Heart left ventricle (tissue), 16 donors: ENCODE measurements at regions of chr9 and their contacts with region 1.

Region 1: GRCh38 chr9:129145822-129146292 is 32.2 kb downstream of the IER5L start:
- DNase-seq: peak in 4 of 5 donors; percentile 71 to 76 (median 74)
- ATAC-seq: peak in 1 of 4 donors; percentile 5
- H3K4me3 ChIP-seq: peak overlapping the region in 2 of 12 donors; percentile 7 to 21
- H3K27ac ChIP-seq: peak overlapping the region; percentile 64 to 100 (median 100)
- H3K4me1 ChIP-seq: peaks cover 24 to 91% (median 74%) of the 10 kb centered on the region in 12 donors
- H3K27me3 ChIP-seq: no peaks in the 10 kb centered on the region
- CTCF ChIP-seq: peak in 1 of 12 donors; percentile 5
- POLR2A ChIP-seq: no peak

Region 2: DNA sequence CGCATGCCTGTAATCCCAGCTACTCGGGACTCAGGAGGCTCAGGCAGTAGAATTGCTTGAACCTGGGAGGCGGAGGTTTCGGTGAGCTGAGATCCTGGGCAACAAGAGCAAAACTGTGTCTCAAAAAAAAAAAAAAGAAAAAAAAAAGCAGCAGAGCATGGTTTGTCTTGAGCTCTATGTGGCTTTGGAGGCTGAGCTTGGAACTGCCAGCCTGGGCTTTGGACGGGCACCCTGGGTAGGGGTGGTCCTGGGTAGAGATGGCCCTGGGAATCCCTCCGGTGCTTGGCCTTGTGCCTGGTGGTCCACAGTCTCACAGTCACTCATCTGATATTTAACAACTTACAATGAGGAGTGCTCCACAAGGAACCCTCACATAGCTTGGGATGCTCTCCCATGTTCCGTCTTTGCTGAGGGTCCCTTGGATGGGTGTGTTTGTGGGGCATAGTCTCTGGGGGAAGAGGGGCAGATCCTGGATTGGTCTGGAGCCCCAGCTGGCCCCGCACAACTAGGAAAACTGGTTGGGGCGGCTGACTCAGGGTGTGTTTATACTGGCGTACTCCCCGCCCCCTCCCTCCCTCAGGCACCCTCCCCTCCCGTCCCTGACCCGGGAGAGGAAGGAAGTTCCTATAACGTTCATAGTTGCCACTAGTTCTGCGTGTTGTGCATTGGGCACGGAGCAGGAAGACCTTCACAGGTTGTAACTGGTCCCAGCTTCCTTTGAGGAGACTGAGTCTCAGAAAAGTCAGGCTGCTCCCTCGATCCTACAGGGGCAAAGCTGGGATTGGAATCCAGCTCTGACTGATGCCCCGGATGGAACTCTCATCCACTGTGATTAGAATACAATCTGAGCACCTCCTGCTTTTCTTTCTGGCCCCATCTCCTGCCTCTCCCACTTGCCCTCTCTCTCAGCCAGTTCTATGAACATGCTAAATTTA is 21.0 kb after region 1 on chr9:
- intact Hi-C with region 1: loop called in 1 of 10 experiments (anchors 2 kb)
- DNase-seq: peak; percentile 70 to 81 (median 79)
- ATAC-seq: peak; percentile 69 to 83 (median 78)
- H3K4me3 ChIP-seq: peak overlapping the region in 9 of 12 donors; percentile 18 to 47 (median 36)
- H3K27ac ChIP-seq: peak overlapping the region; percentile 15 to 89 (median 78)
- H3K4me1 ChIP-seq: peaks cover 0 to 53% (median 23%) of the 10 kb centered on the region in 12 donors
- H3K27me3 ChIP-seq: no peaks in the 10 kb centered on the region
- CTCF ChIP-seq: no peak
- POLR2A ChIP-seq: peak in 1 of 2 donors; percentile 31

Region 3: GRCh38 chr9:130143958-130144366 is 998.1 kb after region 1 on chr9:
- intact Hi-C with region 1: no loop called
- DNase-seq: peak; percentile 46 to 67 (median 64)
- ATAC-seq: peak; percentile 64 to 91 (median 81)
- H3K4me3 ChIP-seq: no peak overlapping the region
- H3K27ac ChIP-seq: peak overlapping the region in 3 of 12 donors; percentile 6 to 34 (median 25)
- H3K4me1 ChIP-seq: peaks cover 0 to 35% (median 23%) of the 10 kb centered on the region in 12 donors
- H3K27me3 ChIP-seq: peaks cover 0 to 10% (median 0%) of the 10 kb centered on the region in 9 donors
- CTCF ChIP-seq: no peak
- POLR2A ChIP-seq: no peak